ENCODE measurements at regions of chr3 and their contacts with region 1.

Region 1: GRCh38 chr3:128170805-128171516 is 17.7 kb downstream of the EEFSEC start:
- DNase-seq: peak in 7 of 10 donors; percentile 14 to 68 (median 60)
- H3K4me3 ChIP-seq: no peak overlapping the region
- H3K27ac ChIP-seq: no peak overlapping the region
- H3K27me3 ChIP-seq: no peaks in the 10 kb centered on the region
- CTCF ChIP-seq: peak; percentile 50 to 93 (median 76)

Region 2: GRCh38 chr3:128095222-128095703 is 75.7 kb before region 1 on chr3:
- intact Hi-C with region 1: loop called in 1 of 2 experiments (anchors 5 kb)
- DNase-seq: peak; percentile 78 to 89 (median 87)
- H3K4me3 ChIP-seq: no peak overlapping the region
- H3K27ac ChIP-seq: peak overlapping the region in 29 of 59 donors; percentile 2 to 72 (median 43)
- H3K27me3 ChIP-seq: no peaks in the 10 kb centered on the region
- CTCF ChIP-seq: peak; percentile 60 to 93 (median 86)

Region 3: DNA sequence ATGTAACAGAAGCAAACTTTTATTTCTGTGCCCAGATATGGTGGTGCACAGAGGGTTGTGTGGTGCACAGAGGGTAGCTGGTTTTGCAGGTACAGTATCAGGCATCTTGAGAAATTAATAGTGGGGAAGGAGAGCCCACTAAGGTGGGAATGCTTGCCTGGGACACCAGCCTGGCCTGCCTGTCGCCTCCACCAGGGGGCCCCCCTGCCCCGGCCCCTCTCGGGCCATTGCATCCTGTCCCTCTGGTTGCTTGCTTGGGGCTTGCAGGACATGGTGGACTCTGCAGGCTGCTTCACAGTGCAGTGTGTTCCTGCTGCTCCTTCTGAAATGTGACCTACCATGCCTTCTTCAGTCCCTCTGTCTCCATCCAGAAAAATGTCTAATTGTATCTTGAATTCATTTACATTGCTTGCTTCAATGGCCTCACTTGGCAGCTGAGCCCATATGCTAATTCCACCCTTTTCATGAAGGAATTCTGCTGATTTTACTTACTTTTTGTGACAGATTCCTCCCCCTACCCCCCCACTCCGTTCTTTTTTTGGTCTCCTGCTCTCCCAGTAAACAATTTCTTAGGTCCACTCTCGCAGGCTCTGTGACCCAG is 55.9 kb after region 1 on chr3:
- intact Hi-C with region 1: no loop called
- DNase-seq: peak in 3 of 10 donors; percentile 34 to 52 (median 40)
- H3K4me3 ChIP-seq: no peak overlapping the region
- H3K27ac ChIP-seq: no peak overlapping the region
- H3K27me3 ChIP-seq: no peaks in the 10 kb centered on the region
- CTCF ChIP-seq: peak in 55 of 56 donors; percentile 36 to 81 (median 65)

Region 4: GRCh38 chr3:128426128-128426921 is 255.4 kb after region 1 on chr3:
- intact Hi-C with region 1: loop called (anchors 10 kb)
- DNase-seq: peak in 4 of 10 donors; percentile 22 to 73 (median 40)
- H3K4me3 ChIP-seq: peak overlapping the region in 55 of 59 donors; percentile 5 to 63 (median 41)
- H3K27ac ChIP-seq: peak overlapping the region in 1 of 59 donors; percentile 2
- H3K27me3 ChIP-seq: peaks cover 0 to 21% (median 3%) of the 10 kb centered on the region in 45 donors
- CTCF ChIP-seq: peak; percentile 21 to 96 (median 76)

Region 5: GRCh38 chr3:128503164-128503651 is 332.2 kb after region 1 on chr3:
- intact Hi-C with region 1: loop called (anchors 5 to 10 kb)
- DNase-seq: peak in 1 of 10 donors; percentile 17
- H3K4me3 ChIP-seq: no peak overlapping the region
- H3K27ac ChIP-seq: no peak overlapping the region
- H3K27me3 ChIP-seq: peaks cover 0 to 66% (median 24%) of the 10 kb centered on the region in 45 donors
- CTCF ChIP-seq: no peak

Region 6: GRCh38 chr3:128603811-128604775 is 433.1 kb after region 1 on chr3:
- intact Hi-C with region 1: loop called in 1 of 2 experiments (anchors 10 kb)
- DNase-seq: no peak
- H3K4me3 ChIP-seq: no peak overlapping the region
- H3K27ac ChIP-seq: no peak overlapping the region
- H3K27me3 ChIP-seq: no peaks in the 10 kb centered on the region
- CTCF ChIP-seq: no peak